Heart left ventricle (tissue), 16 donors: ENCODE measurements at regions of chr17 and their contacts with region 1.

Region 1: GRCh38 chr17:40317880-40318829 is 9.2 kb downstream of the RARA start:
- DNase-seq: peak; percentile 96 to 98 (median 97)
- ATAC-seq: peak; percentile 87 to 93 (median 92)
- H3K4me3 ChIP-seq: peak overlapping the region; percentile 76 to 100 (median 88)
- H3K27ac ChIP-seq: peak overlapping the region; percentile 90 to 99 (median 95)
- H3K4me1 ChIP-seq: peaks cover 15 to 96% (median 84%) of the 10 kb centered on the region in 12 donors
- H3K27me3 ChIP-seq: no peaks in the 10 kb centered on the region
- CTCF ChIP-seq: no peak
- POLR2A ChIP-seq: peak; percentile 27 to 92

Region 2: GRCh38 chr17:40203131-40203530 is 115.0 kb before region 1 on chr17:
- intact Hi-C with region 1: no loop called
- DNase-seq: no peak
- ATAC-seq: peak in 2 of 4 donors; percentile 65
- H3K4me3 ChIP-seq: no peak overlapping the region
- H3K27ac ChIP-seq: no peak overlapping the region
- H3K4me1 ChIP-seq: peaks cover 0 to 16% (median 0%) of the 10 kb centered on the region in 12 donors
- H3K27me3 ChIP-seq: no peaks in the 10 kb centered on the region
- CTCF ChIP-seq: no peak
- POLR2A ChIP-seq: no peak

Region 3: DNA sequence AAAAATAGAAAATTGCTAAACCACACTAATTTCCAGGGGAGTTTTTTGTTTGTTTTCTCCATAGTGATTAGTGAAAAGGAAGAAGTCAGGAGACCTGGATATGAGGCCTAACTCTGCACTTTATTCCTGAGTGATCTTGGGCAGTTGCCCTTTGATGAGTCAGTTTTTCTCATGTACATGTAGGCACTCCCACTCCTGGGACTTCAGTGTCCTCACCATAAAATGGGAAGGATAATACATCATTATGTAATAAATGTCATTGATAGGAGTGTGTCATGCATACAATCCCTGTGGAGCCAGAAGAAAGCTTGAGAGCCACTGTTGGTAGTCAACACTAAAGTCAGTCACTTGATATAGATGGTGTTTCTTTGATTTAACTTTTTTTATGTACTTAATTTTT is 66.6 kb before region 1 on chr17:
- intact Hi-C with region 1: no loop called
- DNase-seq: no peak
- ATAC-seq: peak in 3 of 4 donors; percentile 72 to 88 (median 83)
- H3K4me3 ChIP-seq: no peak overlapping the region
- H3K27ac ChIP-seq: peak overlapping the region in 1 of 12 donors; percentile 32
- H3K4me1 ChIP-seq: peaks cover 0 to 35% (median 12%) of the 10 kb centered on the region in 12 donors
- H3K27me3 ChIP-seq: no peaks in the 10 kb centered on the region
- CTCF ChIP-seq: no peak
- POLR2A ChIP-seq: no peak

Region 4: DNA sequence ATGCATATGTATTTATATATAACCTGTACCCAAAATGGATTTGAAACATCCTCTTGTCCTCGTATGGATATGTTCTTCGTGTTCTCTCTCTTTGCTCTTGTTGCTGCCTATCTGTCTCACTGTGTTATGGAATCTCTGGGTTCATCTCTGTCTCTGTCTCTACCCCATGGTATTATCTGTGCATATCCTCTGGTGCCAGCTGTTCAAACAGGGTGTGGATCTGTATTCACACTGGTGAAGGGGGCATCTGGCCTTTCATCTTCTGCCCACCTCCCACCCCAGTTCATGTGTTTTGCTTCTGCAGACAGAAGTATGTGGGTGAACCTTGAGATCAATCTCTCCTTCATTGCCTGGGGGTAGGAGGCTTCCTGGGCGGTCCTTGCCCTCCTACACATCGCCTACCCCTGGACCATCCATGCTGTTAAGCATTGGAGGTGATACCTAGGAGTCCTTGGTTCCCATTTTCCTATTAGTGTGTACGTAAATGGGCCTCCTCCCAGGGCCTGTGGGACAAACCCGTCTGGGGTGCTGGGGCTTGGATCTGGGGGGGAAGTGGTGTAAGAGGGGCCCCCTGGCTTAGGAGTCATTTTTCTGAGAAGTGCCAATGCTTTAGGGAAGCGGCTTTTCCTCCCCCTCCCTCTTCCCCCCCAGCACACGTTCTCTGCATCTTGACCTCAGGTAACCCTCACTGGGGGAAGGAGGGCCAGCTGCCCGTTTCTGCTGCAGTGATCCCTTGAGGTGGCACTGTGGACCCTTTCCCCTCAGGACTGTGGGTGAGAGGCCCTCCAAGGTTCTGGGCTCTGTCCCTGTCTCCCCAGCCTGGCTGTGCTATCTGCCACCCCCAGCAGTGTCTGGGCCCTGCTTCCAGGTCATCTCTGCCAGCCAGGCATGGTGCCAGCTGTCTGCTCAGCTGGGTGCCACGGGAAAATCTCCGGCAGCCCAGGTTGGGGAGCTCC is 12.0 kb after region 1 on chr17:
- intact Hi-C with region 1: no loop called
- DNase-seq: peak; percentile 82 to 89 (median 85)
- ATAC-seq: peak; percentile 35 to 51 (median 40)
- H3K4me3 ChIP-seq: peak overlapping the region in 1 of 12 donors; percentile 39
- H3K27ac ChIP-seq: peak overlapping the region in 11 of 12 donors; percentile 66 to 98 (median 85)
- H3K4me1 ChIP-seq: peaks cover 67 to 100% (median 99%) of the 10 kb centered on the region in 12 donors
- H3K27me3 ChIP-seq: no peaks in the 10 kb centered on the region
- CTCF ChIP-seq: no peak
- POLR2A ChIP-seq: no peak

Region 5: GRCh38 chr17:40340880-40341807 is 23.0 kb after region 1 on chr17:
- intact Hi-C with region 1: loop called in 3 of 10 experiments (anchors 1 to 2 kb)
- DNase-seq: peak; percentile 92 to 98 (median 96)
- ATAC-seq: peak; percentile 62 to 80 (median 78)
- H3K4me3 ChIP-seq: peak overlapping the region; percentile 62 to 98 (median 82)
- H3K27ac ChIP-seq: peak overlapping the region; percentile 88 to 99 (median 96)
- H3K4me1 ChIP-seq: peaks cover 5 to 85% (median 53%) of the 10 kb centered on the region in 12 donors
- H3K27me3 ChIP-seq: no peaks in the 10 kb centered on the region
- CTCF ChIP-seq: peak in 6 of 12 donors; percentile 11 to 50 (median 32)
- POLR2A ChIP-seq: peak in 1 of 2 donors; percentile 81

Region 6: DNA sequence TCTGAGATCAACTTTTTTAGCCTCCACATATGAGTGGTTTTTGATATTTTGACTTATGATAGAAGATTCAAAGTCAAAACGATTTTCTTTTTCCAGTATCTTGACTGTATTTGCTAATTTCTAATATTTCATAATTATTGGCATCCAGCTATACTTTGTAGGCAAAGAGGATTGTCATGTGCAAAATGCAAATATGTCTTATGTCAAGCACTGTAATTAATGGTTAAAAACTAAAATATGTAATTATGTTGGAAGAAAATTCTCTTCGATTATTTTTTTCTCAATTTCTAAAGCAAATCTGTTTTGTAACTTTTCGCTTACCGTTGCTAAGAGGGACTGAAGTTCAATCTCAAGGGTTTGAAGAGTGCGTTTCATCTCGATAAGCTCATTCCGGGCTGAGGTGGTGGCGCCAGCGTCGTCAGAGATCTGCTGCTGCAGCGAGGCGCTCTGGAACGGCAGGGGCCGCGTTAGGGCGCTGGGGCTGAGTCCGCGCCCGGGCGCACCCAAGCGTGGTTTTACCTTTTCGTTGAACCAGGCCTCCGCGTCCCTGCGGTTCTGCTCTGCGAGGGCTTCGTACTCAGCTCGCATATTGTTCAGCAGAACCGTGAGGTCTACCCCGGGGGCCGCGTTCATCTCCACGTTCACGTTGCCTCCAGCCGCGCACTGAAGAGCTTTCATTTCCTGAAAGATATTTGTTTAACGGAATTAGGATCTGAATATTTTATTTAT is 461.2 kb after region 1 on chr17:
- intact Hi-C with region 1: no loop called
- DNase-seq: peak in 1 of 5 donors; percentile 21
- ATAC-seq: no peak
- H3K4me3 ChIP-seq: peak overlapping the region in 3 of 12 donors; percentile 10 to 43 (median 17)
- H3K27ac ChIP-seq: no peak overlapping the region
- H3K4me1 ChIP-seq: no peaks in the 10 kb centered on the region
- H3K27me3 ChIP-seq: peaks cover 0 to 49% (median 17%) of the 10 kb centered on the region in 9 donors
- CTCF ChIP-seq: no peak
- POLR2A ChIP-seq: no peak